Calu3 (cell line): ENCODE measurements at regions of chr13 and their contacts with region 1.

Region 1: DNA sequence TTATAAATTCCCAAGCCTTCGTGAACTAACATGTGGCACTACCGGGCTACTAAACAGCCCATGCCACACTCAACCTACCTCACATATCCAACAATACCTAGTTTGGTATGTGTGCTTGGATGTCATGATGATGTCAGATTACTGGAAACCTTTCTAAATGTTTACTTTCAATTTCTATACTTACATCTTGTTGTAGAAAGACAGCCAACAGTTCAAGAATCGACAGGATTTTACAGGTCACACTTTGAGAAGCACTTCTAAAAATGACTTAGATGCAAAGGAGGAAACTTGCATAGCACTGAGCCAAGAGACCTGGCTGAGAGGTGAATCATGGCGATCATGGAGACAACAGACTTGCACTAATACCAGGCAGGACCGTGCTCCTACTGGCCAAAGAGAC is 209.9 kb downstream of the COL4A1 start:
- DNase-seq: no peak
- H3K4me3 Mint-ChIP-seq: no peak overlapping the region
- H3K27ac Mint-ChIP-seq: no peak overlapping the region
- H3K4me1 Mint-ChIP-seq: no peaks in the 10 kb centered on the region
- H3K27me3 Mint-ChIP-seq: no peaks in the 10 kb centered on the region
- CTCF ChIP-seq: no peak

Region 2: GRCh38 chr13:109196948-109197347 is 900.1 kb before region 1 on chr13:
- CTCF ChIA-PET with region 1: no interaction called
- intact Hi-C with region 1: no loop called
- DNase-seq: no peak
- H3K4me3 Mint-ChIP-seq: no peak overlapping the region
- H3K27ac Mint-ChIP-seq: no peak overlapping the region
- H3K4me1 Mint-ChIP-seq: no peaks in the 10 kb centered on the region
- H3K27me3 Mint-ChIP-seq: no peaks in the 10 kb centered on the region
- CTCF ChIP-seq: no peak

Region 3: GRCh38 chr13:109904218-109904617 is 192.8 kb before region 1 on chr13:
- CTCF ChIA-PET with region 1: no interaction called
- intact Hi-C with region 1: no loop called
- DNase-seq: no peak
- H3K4me3 Mint-ChIP-seq: no peak overlapping the region
- H3K27ac Mint-ChIP-seq: no peak overlapping the region
- H3K4me1 Mint-ChIP-seq: no peaks in the 10 kb centered on the region
- H3K27me3 Mint-ChIP-seq: no peaks in the 10 kb centered on the region
- CTCF ChIP-seq: no peak

Region 4: DNA sequence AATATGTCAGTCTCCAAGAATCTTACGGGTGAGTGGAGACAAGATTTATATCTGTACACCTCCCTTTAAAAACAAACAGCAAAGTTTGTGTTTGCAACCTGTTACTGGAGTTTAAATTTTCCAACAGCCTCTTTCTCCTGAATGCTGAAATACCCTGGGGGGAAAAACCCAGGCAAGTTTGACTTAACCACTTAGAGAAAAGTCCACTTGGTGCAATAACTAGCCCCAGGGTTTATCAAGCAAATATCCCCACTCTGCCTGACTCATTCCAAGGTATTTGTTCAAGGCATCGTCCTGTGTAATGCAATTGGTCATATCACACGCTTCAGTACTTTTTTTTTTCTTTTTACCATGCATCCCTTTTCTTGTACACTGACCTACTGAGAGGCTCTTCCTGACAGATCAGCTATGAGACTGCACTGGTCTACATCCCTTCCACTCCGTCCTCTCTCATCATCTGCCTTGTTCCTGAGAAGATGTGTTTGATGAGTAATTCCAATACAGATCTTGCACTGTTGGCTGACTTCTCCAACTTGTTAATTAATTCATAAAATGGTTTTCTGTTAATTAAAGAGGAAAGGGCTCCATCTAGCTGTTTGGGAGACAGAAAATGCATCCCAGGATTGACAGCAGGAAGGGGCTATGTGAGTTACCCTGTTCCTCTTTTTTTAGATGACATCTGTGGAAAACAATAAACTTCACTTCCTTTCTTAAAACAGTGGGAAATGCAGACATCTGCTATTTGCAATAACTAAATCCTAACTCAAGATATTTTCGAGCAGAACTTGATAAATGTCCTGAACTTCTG is 98.1 kb before region 1 on chr13:
- CTCF ChIA-PET with region 1: no interaction called
- intact Hi-C with region 1: no loop called
- DNase-seq: no peak
- H3K4me3 Mint-ChIP-seq: no peak overlapping the region
- H3K27ac Mint-ChIP-seq: no peak overlapping the region
- H3K4me1 Mint-ChIP-seq: peaks cover 8% of the 10 kb centered on the region
- H3K27me3 Mint-ChIP-seq: no peaks in the 10 kb centered on the region
- CTCF ChIP-seq: no peak

Region 5: DNA sequence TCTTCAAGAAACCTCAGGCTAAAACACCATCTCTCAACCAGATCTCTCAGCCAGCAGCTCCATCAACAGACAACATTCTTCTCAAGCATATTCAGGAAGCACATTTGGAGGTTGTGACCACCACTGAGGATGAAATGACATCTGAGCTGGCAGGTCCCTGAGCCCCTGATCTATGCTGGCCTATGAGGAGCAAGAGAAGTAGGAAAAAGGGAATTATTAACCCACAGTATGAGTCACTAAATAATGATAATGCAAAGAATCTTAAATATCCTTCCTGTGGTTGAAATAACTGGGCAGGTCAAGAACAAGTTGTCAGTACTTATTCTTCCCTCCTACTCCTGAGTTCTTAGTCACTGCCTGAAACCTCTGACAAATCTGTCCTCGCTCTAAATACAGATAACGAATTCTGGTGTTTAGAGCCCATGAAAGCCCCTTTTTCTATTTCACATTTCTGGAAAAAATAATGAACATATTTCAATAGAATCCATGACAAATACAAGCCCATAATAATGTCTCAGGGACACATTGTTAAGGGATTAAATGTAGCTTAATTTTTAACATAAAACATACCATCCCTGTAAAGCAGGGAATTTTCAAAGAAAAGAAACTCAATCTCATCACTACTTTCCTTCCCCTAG is 84.8 kb before region 1 on chr13:
- CTCF ChIA-PET with region 1: no interaction called
- intact Hi-C with region 1: loop called (anchors 5 kb)
- DNase-seq: peak; percentile 22
- H3K4me3 Mint-ChIP-seq: peak overlapping the region; percentile 43
- H3K27ac Mint-ChIP-seq: peak overlapping the region; percentile 93
- H3K4me1 Mint-ChIP-seq: peaks cover 17% of the 10 kb centered on the region
- H3K27me3 Mint-ChIP-seq: no peaks in the 10 kb centered on the region
- CTCF ChIP-seq: no peak

Region 6: DNA sequence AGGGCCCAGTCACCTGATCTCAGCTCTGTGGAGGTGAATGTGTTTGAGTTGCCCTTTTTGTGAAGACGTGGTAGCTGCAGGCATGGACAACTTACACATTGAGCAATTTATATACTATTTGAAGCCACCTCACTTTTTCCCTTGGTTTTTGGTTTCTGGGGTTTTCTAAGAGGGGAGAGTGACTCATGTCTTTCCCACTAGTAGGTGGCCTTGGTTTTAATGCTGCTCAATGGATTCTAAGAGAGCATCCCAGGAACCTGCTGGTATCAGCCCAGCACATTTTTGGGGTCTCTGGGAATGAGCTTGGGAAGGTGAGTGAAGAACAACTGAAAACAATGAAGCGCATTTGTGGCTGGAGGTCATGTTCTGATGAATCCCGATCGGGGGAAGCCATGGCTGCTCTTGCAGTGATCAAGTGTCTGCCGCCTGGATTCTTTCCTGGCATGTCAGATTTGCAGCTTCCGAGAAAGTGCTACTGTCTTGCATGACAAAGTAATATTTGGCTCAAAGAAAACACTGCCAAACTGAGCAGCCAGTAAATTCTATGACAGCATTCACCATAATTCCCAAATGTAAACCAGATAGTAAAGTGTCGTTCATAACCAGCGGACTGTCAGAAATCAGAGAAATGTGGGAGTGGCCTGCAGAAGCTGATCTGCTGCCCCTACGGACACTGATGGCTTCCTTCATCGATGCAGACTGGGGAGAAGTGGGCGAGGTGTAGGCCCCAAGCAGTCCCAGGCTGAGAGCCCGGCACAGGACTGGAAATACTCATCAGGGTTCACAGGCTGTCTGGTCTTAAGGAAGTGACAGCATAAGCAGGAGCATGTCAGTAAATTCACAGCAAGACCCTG is 308.8 kb after region 1 on chr13:
- CTCF ChIA-PET with region 1: no interaction called
- intact Hi-C with region 1: no loop called
- DNase-seq: no peak
- H3K4me3 Mint-ChIP-seq: no peak overlapping the region
- H3K27ac Mint-ChIP-seq: no peak overlapping the region
- H3K4me1 Mint-ChIP-seq: peaks cover 18% of the 10 kb centered on the region
- H3K27me3 Mint-ChIP-seq: no peaks in the 10 kb centered on the region
- CTCF ChIP-seq: no peak